Uterus (tissue), 4 donors: ENCODE measurements at regions of chr7 and their contacts with region 1.

Region 1: DNA sequence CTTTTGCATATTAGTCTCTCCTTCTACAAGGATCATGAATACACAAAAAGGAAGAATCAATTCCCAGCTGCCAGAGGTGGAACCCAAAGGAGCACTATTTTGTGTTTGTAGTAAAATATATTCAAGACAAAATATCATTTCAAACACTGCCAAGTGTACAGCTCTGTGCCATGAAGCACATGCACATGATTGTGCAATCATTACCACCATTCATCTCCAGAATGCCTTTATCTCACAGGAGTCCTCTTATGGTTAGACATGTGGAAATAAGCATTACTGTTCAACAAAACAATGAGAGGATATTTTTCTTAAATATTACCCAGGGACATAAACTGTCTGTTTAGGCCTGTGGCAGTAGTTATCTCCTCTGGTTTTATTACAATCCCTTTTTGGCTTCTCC is 151.4 kb upstream of the PPP1R3A start:
- DNase-seq: no peak
- H3K4me3 ChIP-seq: no peak overlapping the region
- H3K27ac ChIP-seq: no peak overlapping the region
- H3K4me1 ChIP-seq: no peaks in the 10 kb centered on the region
- H3K27me3 ChIP-seq: no peaks in the 10 kb centered on the region
- CTCF ChIP-seq: no peak
- POLR2A ChIP-seq: no peak

Region 2: DNA sequence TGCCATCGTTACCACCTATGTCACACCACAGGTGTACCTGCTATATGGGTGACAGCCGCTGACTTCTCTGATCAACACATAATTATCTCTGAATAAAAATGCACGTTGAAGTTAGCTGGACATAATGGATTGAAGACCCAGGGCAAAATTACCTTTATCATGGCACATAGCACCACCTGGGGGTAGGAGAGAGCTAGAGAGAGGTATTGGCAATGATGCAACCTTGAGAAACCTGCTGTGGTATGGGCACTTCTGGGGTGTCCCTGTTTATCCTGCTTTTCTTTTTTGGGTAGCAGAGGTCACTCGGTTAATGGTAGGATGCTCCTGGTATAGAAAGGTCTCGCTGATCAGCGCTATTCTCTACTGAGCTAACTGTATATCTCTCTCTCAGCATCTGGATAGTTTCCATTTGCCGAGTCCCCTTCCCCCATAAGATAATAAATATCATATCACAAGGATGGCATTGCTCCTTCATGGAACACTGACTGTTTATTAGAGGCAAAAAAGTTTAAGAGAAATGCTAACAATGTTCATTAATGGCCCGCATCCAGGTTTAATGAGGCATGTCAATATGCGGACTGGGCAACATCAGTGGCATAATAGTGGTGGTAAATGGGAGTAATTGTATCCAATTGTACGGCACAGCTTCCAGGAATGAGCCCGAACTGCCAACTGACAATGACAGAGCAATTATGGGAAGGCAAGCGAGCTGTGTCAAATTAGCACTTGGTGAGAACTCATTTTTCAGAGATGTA is 1637.2 kb after region 1 on chr7:
- intact Hi-C with region 1: loop called (anchors 10 kb)
- DNase-seq: no peak
- H3K4me3 ChIP-seq: no peak overlapping the region
- H3K27ac ChIP-seq: no peak overlapping the region
- H3K4me1 ChIP-seq: no peaks in the 10 kb centered on the region
- H3K27me3 ChIP-seq: no peaks in the 10 kb centered on the region
- CTCF ChIP-seq: no peak
- POLR2A ChIP-seq: no peak